Ovary (tissue), 10 donors: ENCODE measurements at regions of chr7 and their contacts with region 1.

Region 1: GRCh38 chr7:107150375-107151073 is 18.3 kb upstream of the HBP1 start:
- DNase-seq: peak; percentile 68 to 89 (median 83)
- H3K4me3 ChIP-seq: no peak overlapping the region
- H3K27ac ChIP-seq: no peak overlapping the region
- H3K4me1 ChIP-seq: no peaks in the 10 kb centered on the region
- H3K27me3 ChIP-seq: no peaks in the 10 kb centered on the region
- CTCF ChIP-seq: peak; percentile 44 to 78 (median 61)
- EP300 ChIP-seq: no peak
- POLR2A ChIP-seq: no peak

Region 2: GRCh38 chr7:106793015-106793975 is 357.2 kb before region 1 on chr7:
- intact Hi-C with region 1: loop called in 2 of 4 experiments (anchors 5 kb)
- DNase-seq: no peak
- H3K4me3 ChIP-seq: no peak overlapping the region
- H3K27ac ChIP-seq: no peak overlapping the region
- H3K4me1 ChIP-seq: no peaks in the 10 kb centered on the region
- H3K27me3 ChIP-seq: no peaks in the 10 kb centered on the region
- CTCF ChIP-seq: peak in 2 of 3 donors; percentile 46 to 48
- EP300 ChIP-seq: no peak
- POLR2A ChIP-seq: no peak

Region 3: DNA sequence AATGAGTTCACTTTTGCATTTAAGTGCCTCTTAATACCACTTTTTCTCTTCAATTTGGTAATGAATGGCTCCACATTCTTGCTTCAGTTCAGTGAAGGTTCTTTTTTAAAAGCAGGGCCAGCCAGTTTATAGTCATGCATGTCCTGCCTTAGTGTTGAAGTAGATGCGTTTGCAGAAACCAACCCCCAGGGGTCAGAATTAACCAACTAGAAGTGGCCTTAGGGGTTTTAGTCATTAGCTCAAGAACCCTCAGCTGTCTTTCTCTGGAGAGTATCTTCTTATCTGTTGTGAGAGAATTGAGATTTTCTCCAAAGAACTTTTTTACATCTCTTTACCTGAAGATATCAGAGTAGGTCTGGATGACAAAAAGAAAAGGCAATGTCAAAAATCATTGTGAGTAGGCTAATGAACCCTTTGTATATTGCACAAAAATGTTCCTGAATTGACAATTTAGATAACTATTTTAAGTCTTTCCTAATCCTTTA is 203.2 kb before region 1 on chr7:
- intact Hi-C with region 1: loop called in 3 of 4 experiments (anchors 5 kb)
- DNase-seq: peak in 4 of 5 donors; percentile 29 to 76 (median 46)
- H3K4me3 ChIP-seq: no peak overlapping the region
- H3K27ac ChIP-seq: no peak overlapping the region
- H3K4me1 ChIP-seq: no peaks in the 10 kb centered on the region
- H3K27me3 ChIP-seq: no peaks in the 10 kb centered on the region
- CTCF ChIP-seq: peak; percentile 60 to 80 (median 76)
- EP300 ChIP-seq: no peak
- POLR2A ChIP-seq: no peak

Region 4: GRCh38 chr7:106959753-106960152 is 190.8 kb before region 1 on chr7:
- intact Hi-C with region 1: loop called in 1 of 4 experiments (anchors 5 kb)
- DNase-seq: no peak
- H3K4me3 ChIP-seq: no peak overlapping the region
- H3K27ac ChIP-seq: no peak overlapping the region
- H3K4me1 ChIP-seq: no peaks in the 10 kb centered on the region
- H3K27me3 ChIP-seq: no peaks in the 10 kb centered on the region
- CTCF ChIP-seq: no peak
- EP300 ChIP-seq: no peak
- POLR2A ChIP-seq: no peak